Head of caudate nucleus (tissue), 42 donors: ENCODE measurements at regions of chr15 and their contacts with region 1.

Region 1: DNA sequence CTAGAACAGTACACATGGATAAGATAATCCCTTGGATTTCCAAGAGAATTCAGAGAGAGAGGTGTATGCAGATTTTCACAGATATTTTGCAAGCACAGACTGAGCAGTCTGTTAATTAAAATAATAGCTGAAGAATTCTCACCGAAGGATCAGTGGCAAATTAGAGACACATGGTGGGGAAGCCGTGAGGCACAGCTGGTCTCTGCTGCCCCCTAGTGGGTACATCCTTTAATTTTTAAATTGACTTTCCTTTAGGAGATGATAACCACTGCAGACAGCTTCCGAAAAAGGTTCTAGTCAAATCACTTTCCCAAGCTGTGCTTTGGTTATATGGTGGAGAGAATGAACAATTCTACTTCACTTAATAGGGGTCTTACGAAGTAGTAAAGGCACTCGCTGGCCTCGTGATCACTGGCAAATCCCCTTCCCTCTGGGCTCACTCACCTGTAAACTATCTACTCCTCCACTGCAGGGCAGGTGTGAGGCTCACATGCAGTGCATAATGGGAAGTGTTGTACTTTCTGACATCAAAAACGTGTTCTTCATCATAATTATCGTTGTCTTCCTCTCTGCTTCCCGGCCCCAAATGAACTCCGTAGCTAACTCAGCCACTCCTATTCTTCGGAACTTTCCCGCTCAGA is 19.5 kb downstream of the MESD start:
- DNase-seq: peak; percentile 28 to 89 (median 75)

Region 2: GRCh38 chr15:80455668-80456442 is 514.3 kb before region 1 on chr15:
- intact Hi-C with region 1: loop called (anchors 10 kb)
- DNase-seq: peak; percentile 43 to 90 (median 71)